Activated T-helper 1 cell treated with anti-CD3 and anti-CD28 coated beads, Interleukin-12 subunit alpha, Interleukin-12 subunit beta, Interleukin-2, Interleukin-4 antibody, amounts not matched to agents 30 ng/mL and 10 ng/mL and 1 ng/mL, durations not matched to agents 14 hours and 24 hours and 36 hours (primary cell): ENCODE measurements at regions of chr6 and their contacts with region 1.

Region 1: GRCh38 chr6:125974214-125974866 is 12.0 kb upstream of the TRMT11 start:
- DNase-seq: no peak
- H3K4me3 Mint-ChIP-seq: no peak overlapping the region
- H3K27ac Mint-ChIP-seq: peak overlapping the region; percentile 10
- H3K4me1 Mint-ChIP-seq: peaks cover 6% of the 10 kb centered on the region
- H3K27me3 Mint-ChIP-seq: no peaks in the 10 kb centered on the region

Region 2: GRCh38 chr6:125153391-125154117 is 820.8 kb before region 1 on chr6 and contains the start of gene TPD52L1:
- intact Hi-C with region 1: loop called (anchors 10 kb)
- DNase-seq: peak; percentile 31
- H3K4me3 Mint-ChIP-seq: peak within 1 kb of the TSS; percentile 74
- H3K27ac Mint-ChIP-seq: no peak within 1 kb of the TSS
- H3K4me1 Mint-ChIP-seq: no peaks in the 10 kb centered on the region
- H3K27me3 Mint-ChIP-seq: peaks cover 43% of the 10 kb centered on the region
- total RNA-seq, gene TPD52L1: 0.29 TPM in 1 of 2 replicates, not detected in the other

Region 3: DNA sequence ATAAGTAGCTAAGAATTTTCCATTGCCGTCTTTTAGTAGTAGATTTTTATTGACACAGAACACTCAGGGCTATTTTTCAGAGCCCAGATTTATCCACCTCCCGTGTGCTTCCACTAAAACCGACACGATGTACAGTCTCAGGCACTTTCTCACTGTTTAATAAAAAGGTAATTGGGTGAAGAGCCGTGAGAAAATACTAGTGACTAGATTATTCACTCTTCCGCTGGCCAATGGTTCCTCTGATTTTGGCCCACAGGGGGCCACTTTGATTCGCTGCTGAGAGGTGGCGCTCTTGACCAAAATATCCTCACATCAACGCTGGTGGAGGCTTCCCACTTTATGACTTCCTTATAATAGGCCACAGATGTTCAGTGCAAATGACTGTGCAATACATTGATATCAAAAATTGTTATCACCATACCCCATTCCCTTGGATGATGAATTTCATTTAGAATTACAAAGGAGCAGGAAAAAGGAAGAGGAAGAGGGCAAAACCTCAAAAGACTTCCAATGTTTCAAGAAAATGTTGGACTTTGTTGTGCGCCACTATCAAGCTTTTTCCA is 660.2 kb before region 1 on chr6:
- intact Hi-C with region 1: loop called (anchors 1 kb)
- DNase-seq: peak; percentile 17
- H3K4me3 Mint-ChIP-seq: no peak overlapping the region
- H3K27ac Mint-ChIP-seq: no peak overlapping the region
- H3K4me1 Mint-ChIP-seq: no peaks in the 10 kb centered on the region
- H3K27me3 Mint-ChIP-seq: peaks cover 6% of the 10 kb centered on the region

Region 4: DNA sequence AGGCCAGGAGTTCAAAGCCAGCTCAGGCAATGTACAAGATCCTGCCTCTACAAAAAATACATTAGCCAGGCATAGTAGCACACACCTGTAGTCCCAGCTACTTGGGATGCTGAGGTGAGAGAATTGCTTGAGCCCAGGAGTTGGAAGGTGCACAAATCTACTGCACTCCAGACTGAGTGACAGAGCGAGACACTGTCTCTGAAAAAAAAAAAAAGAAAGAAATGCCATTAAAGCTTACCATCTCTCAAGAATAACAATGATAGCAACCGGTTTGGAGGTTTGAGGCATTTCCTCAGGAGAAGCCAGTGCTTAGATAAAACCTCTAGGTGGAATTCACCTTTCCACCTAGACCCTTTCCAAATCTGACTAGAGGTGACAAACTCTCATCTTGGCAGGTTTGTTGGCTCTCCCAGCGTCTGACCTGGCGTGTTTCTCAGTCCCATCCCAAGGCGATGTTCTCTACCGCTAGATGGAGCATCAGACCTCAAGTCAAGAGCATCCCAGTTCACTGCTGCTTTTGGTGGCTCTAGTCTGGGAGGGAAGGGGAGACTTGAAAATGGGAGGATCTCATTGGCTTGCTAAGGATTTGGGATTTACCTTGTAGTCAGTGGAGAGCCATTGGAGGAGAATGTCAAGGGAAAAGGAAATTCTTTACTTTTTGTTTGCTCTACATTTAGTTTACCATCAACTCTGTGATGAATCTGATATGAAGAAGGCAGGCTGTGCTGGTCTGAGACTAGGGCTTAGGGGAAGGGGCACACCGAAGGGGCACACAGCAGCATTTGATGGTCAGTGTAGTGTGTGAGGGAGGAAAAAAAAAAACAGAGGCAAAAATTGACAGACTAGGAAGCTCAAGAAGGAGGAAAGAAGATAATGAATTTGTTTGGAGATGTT is 115.7 kb before region 1 on chr6:
- intact Hi-C with region 1: loop called (anchors 1 kb)
- DNase-seq: peak; percentile 6
- H3K4me3 Mint-ChIP-seq: no peak overlapping the region
- H3K27ac Mint-ChIP-seq: peak overlapping the region; percentile 9
- H3K4me1 Mint-ChIP-seq: no peaks in the 10 kb centered on the region
- H3K27me3 Mint-ChIP-seq: no peaks in the 10 kb centered on the region

Region 5: DNA sequence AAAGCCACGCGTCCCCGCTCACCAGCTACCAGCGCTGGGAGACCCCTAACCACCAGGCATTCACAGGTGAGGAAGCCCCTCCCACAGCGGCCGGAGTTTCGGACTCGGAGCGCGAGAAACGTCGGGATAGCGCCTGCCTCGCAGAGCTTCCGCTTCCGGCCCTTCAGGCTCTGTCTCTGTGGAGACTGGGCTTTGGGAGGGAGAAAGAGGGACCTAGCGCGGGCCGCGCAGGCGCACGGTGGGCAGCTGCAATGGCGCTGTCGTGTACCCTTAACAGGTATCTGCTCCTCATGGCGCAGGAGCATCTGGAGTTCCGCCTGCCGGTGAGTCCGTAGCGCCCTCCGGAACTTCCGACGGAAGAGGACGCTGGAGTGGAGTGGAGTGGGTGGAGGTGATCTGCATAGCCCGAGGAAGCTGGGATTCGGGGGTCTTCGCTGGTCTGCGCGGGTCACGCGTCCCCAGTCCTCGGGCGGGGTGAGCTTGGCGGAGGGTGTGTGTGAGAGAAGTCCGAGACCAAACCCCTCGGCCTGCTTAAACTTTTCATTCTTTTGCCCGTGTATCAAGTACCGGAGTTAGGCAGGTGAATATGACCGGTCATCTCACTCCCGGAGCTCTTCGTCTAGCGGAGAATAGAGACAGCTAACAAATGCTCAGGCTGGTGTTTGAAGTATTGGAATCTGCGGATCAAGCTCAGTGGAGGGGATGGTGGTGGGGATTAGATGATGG is 12.1 kb after region 1 on chr6 and contains the start of gene TRMT11:
- intact Hi-C with region 1: loop called (anchors 1 kb)
- DNase-seq: peak; percentile 72
- H3K4me3 Mint-ChIP-seq: no peak within 1 kb of the TSS
- H3K27ac Mint-ChIP-seq: no peak within 1 kb of the TSS
- H3K4me1 Mint-ChIP-seq: peaks cover 8% of the 10 kb centered on the region
- H3K27me3 Mint-ChIP-seq: no peaks in the 10 kb centered on the region
- total RNA-seq, gene TRMT11: 27.9 and 29.1 TPM in 2 replicates